ENCODE measurements at regions of chr5 and their contacts with region 1.

Region 1: DNA sequence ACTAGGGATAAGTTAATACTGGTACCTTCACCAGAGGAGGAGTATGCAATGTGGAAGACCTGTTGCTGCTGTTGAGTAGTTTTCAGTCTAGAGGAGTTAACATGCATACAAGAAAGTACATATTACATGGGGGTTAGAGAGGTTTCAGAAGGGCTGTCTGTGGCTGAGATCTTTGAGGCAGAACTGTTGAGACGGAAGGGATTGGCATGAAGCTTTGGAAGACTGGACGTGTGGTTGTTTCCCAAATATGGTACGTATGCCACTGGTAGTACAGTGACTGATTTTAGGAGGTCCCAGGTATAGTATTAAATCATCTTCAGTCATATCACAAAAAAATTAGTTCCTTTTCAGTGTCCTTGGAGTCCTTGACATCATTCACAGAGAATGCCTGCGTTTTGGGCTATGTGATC is 17.6 kb downstream of the TNFAIP8 start:
- DNase-seq: no peak
- H3K4me3 Mint-ChIP-seq: no peak overlapping the region
- H3K27ac Mint-ChIP-seq: peak overlapping the region; percentile 62
- H3K4me1 Mint-ChIP-seq: peaks cover 72% of the 10 kb centered on the region
- H3K27me3 Mint-ChIP-seq: no peaks in the 10 kb centered on the region

Region 2: GRCh38 chr5:119360905-119361593 is 12.4 kb before region 1 on chr5:
- CTCF ChIA-PET with region 1: interaction called, 19 read pairs
- POLR2A ChIA-PET with region 1: interaction called, 66 read pairs
- intact Hi-C with region 1: no loop called
- DNase-seq: no peak
- H3K4me3 Mint-ChIP-seq: peak overlapping the region; percentile 99
- H3K27ac Mint-ChIP-seq: peak overlapping the region; percentile 90
- H3K4me1 Mint-ChIP-seq: peaks cover 80% of the 10 kb centered on the region
- H3K27me3 Mint-ChIP-seq: no peaks in the 10 kb centered on the region

Measured in activated CD4-positive, alpha-beta memory T cell treated with anti-CD3 and anti-CD28 coated beads for 36 hours (primary cell).